HEK293T (cell line): ENCODE measurements at regions of chr1 and their contacts with region 1.

Region 1: DNA sequence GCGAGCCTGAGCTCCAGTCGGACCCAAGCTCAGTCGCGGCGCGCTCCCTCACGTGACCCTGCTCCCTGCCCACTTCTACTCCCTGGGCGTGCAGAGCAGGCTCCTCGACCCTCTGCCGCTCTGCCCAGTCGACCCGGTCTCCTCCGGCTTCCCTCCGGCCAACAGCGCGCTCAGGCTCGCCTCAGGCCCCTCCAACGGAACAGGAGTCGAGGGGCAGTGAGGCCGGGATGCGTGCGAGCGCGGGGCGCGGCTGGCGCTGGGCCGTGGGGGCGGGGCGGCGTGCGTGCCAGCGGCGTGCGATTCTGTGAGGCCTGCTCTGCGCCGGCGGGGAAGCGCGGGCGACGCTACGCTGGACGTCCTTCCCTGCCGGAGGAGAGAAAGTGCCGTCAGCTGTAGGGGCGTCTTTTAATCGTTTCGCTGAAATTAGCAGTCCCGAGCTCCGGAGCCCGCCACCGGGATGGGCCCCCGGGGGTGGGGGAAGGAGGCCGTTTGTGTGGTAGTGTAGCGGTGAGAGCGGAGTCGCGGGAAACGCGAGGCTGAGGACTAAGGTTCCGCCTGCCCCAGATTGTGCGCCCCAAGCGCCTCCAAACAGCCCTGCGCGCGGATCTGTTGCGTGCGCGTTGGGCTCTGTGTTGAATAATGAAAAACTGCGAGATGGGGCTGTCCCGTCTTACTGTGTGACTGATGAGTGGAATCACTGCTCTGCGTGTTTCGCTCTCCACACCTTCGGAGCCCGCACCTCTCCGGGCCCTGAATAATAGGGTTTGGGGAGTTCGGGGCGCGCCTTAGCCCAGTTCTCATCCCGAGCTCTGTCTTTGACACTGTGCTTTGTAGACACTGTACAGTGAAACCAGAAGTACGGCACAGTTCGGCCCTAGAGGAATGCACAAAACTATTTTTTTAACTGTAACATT is at the start of gene ACBD6:
- DNase-seq: peak; percentile 83

Region 2: GRCh38 chr1:180489981-180490375 is 12.6 kb before region 1 on chr1:
- CTCF ChIA-PET with region 1: no interaction called
- POLR2A ChIA-PET with region 1: interaction called, 11 read pairs
- DNase-seq: no peak

Region 3: GRCh38 chr1:180515864-180516388 is 13.3 kb after region 1 on chr1:
- CTCF ChIA-PET with region 1: interaction called, 18 read pairs
- POLR2A ChIA-PET with region 1: interaction called, 46 read pairs
- DNase-seq: peak; percentile 86

Region 4: DNA sequence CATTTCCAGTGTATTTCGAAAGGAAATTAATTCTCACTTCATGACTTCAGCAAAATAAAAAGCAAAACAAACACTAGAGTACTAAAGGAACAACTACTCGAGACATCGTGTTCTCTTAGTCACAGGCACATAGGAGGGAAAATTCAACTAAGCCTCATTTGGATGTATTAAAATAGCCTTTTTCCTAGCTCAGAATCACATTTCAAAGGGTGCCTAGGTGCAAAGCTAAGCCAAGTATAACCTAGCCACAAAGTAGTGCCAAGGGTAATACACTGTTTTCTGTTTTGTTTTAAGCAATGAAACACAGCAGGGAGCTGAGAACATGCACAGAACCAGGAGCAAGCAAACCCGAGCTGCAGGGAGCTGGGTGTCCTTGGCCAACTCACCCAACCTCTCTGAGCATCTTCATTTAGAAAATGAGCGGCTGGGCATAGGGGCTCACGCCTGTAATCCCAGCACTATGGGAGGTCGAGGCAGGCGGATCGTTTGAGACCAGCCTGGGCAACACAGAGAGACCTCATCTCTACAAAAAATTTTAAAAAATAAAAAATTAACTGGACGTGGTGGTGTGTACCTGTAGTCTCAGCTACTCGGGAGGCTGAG is 26.4 kb after region 1 on chr1:
- CTCF ChIA-PET with region 1: interaction called, 10 read pairs
- POLR2A ChIA-PET with region 1: interaction called, 5 read pairs
- DNase-seq: no peak